ENCODE measurements at regions of chr4 and their contacts with region 1.

Region 1: GRCh38 chr4:168318266-168318895 is at the start of gene DDX60:
- DNase-seq: peak; percentile 81
- H3K4me3 Mint-ChIP-seq: peak within 1 kb of the TSS; percentile 85
- H3K27ac Mint-ChIP-seq: peak within 1 kb of the TSS; percentile 83
- H3K4me1 Mint-ChIP-seq: peaks cover 32% of the 10 kb centered on the region
- H3K27me3 Mint-ChIP-seq: no peaks in the 10 kb centered on the region
- total RNA-seq, gene DDX60: 5.3 and 5.6 TPM in 2 replicates

Region 2: DNA sequence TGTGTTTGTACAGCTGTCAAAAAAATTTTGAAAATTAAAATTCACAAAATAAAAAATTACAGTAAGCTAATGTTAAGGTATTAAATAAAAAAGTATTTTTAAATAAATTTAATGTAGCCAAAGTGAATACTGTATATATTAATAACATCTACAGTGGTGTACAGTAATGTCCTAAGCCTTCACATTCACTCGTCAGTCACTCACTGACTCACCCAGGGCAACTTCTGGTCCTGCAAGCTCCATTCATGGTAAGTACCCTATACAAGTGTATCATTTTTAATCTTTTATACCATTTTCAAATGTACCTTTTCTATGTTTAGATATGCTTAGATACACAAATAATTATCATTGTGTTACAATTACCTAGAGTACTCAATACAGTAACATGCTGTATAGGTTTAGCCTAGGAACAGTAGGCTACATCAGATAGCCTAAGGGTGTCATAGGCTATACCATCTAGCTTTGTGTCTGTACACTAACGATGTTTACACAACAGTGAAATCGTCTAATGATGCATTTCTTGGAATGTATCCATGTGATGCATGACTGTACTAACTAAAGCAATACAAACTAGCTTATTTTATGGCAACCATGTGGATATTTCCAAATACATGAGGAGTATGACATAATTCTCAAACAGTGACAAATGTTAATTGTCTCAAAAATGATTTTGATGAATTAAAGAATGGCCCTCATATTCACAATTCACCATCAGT is 13.5 kb before region 1 on chr4:
- intact Hi-C with region 1: no loop called
- DNase-seq: no peak
- H3K4me3 Mint-ChIP-seq: no peak overlapping the region
- H3K27ac Mint-ChIP-seq: no peak overlapping the region
- H3K4me1 Mint-ChIP-seq: peaks cover 11% of the 10 kb centered on the region
- H3K27me3 Mint-ChIP-seq: no peaks in the 10 kb centered on the region

Region 3: GRCh38 chr4:168480931-168481611 is 162.7 kb after region 1 on chr4:
- intact Hi-C with region 1: loop called (anchors 1 kb)
- DNase-seq: peak; percentile 41
- H3K4me3 Mint-ChIP-seq: peak overlapping the region; percentile 91
- H3K27ac Mint-ChIP-seq: peak overlapping the region; percentile 88
- H3K4me1 Mint-ChIP-seq: peaks cover 45% of the 10 kb centered on the region
- H3K27me3 Mint-ChIP-seq: peaks cover 25% of the 10 kb centered on the region